Natural killer cell (primary cell): ENCODE measurements at regions of chr1 and their contacts with region 1.

Region 1: GRCh38 chr1:109483672-109484518 is at the start of gene ATXN7L2:
- DNase-seq: peak; percentile 88 to 97
- ATAC-seq: peak; percentile 83 to 93 (median 85)
- H3K4me3 ChIP-seq: peak within 1 kb of the TSS; percentile 52
- H3K4me3 Mint-ChIP-seq: peak within 1 kb of the TSS; percentile 93
- H3K27ac ChIP-seq: peak within 1 kb of the TSS; percentile 96
- H3K27ac Mint-ChIP-seq: peak within 1 kb of the TSS; percentile 83 to 87
- H3K4me1 ChIP-seq: peaks cover 17% of the 10 kb centered on the region
- H3K4me1 Mint-ChIP-seq: peaks cover 22 to 24% of the 10 kb centered on the region in 2 donors
- H3K27me3 ChIP-seq: no peaks in the 10 kb centered on the region
- H3K27me3 Mint-ChIP-seq: peaks cover 14 to 20% of the 10 kb centered on the region in 2 donors
- CTCF ChIP-seq: no peak
- total RNA-seq, gene ATXN7L2: 16.4 to 18.5 (median 18.3) TPM

Region 2: GRCh38 chr1:109248797-109249642 is 234.9 kb before region 1 on chr1 and contains the start of gene CELSR2:
- intact Hi-C with region 1: loop called (anchors 5 kb)
- DNase-seq: peak; percentile 58 to 82
- ATAC-seq: peak; percentile 87 to 96 (median 96)
- H3K4me3 ChIP-seq: peak within 1 kb of the TSS; percentile 26
- H3K4me3 Mint-ChIP-seq: peak within 1 kb of the TSS; percentile 78
- H3K27ac ChIP-seq: no peak within 1 kb of the TSS
- H3K27ac Mint-ChIP-seq: peak within 1 kb of the TSS in 1 of 2 donors; percentile 64
- H3K4me1 ChIP-seq: peaks cover 24% of the 10 kb centered on the region
- H3K4me1 Mint-ChIP-seq: peaks cover 0 to 28% of the 10 kb centered on the region in 2 donors
- H3K27me3 ChIP-seq: peaks cover 11% of the 10 kb centered on the region
- H3K27me3 Mint-ChIP-seq: peaks cover 9 to 14% of the 10 kb centered on the region in 2 donors
- CTCF ChIP-seq: no peak
- total RNA-seq, gene CELSR2: 7.1 to 9.7 (median 7.4) TPM

Region 3: DNA sequence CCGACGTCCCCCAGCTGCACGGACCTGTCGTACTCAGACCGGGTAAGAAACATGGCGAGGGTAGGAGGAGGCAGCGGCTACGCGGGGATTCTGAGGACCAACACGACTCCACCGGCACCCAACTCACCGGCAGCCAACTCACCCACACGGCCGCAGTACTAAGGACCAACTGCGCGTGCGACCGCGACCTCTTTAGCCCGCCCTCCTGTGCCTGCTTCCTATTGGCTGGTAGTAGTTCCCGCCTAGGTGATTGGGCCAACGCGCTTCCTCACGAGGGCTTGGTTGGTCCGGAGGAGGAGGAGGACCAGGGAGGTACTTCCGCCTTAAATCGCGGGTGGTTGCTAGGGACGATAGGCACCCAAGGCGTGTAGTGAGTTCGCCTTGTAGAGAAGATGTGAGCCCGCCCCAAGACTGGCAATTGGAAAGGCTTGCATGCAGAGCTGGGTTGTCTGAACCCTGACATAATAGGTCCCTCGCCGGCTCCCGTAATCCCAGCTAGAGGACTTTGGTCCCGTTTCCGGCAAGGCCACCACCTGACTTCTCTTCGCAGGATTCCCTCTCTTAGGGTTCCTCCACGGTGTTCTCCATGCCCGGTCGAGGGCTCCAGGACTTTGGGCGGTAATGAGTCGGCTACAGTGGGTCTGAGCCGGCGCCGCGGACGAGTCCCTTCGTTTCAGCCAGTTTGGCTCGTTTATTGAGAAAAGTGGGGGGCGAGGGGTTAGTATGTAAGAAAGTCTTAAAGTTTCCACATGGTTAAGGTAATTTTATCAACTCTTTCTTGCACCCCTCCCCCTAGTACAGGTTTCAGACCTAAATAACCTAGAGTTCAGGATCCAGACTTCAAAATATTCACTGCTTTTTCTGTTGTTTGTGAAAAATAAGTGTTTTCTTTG is 57.4 kb before region 1 on chr1 and contains the start of gene PSMA5:
- intact Hi-C with region 1: loop called (anchors 1 kb)
- DNase-seq: peak; percentile 92 to 98
- ATAC-seq: peak; percentile 87 to 98 (median 94)
- H3K4me3 ChIP-seq: peak within 1 kb of the TSS; percentile 94
- H3K4me3 Mint-ChIP-seq: peak within 1 kb of the TSS; percentile 96
- H3K27ac ChIP-seq: peak within 1 kb of the TSS; percentile 96
- H3K27ac Mint-ChIP-seq: peak within 1 kb of the TSS; percentile 98
- H3K4me1 ChIP-seq: peaks cover 17% of the 10 kb centered on the region
- H3K4me1 Mint-ChIP-seq: peaks cover 36 to 45% of the 10 kb centered on the region in 2 donors
- H3K27me3 ChIP-seq: no peaks in the 10 kb centered on the region
- H3K27me3 Mint-ChIP-seq: peaks cover 0 to 9% of the 10 kb centered on the region in 2 donors
- CTCF ChIP-seq: no peak
- total RNA-seq, gene PSMA5: 54.7 to 76.0 (median 59.6) TPM

Region 4: DNA sequence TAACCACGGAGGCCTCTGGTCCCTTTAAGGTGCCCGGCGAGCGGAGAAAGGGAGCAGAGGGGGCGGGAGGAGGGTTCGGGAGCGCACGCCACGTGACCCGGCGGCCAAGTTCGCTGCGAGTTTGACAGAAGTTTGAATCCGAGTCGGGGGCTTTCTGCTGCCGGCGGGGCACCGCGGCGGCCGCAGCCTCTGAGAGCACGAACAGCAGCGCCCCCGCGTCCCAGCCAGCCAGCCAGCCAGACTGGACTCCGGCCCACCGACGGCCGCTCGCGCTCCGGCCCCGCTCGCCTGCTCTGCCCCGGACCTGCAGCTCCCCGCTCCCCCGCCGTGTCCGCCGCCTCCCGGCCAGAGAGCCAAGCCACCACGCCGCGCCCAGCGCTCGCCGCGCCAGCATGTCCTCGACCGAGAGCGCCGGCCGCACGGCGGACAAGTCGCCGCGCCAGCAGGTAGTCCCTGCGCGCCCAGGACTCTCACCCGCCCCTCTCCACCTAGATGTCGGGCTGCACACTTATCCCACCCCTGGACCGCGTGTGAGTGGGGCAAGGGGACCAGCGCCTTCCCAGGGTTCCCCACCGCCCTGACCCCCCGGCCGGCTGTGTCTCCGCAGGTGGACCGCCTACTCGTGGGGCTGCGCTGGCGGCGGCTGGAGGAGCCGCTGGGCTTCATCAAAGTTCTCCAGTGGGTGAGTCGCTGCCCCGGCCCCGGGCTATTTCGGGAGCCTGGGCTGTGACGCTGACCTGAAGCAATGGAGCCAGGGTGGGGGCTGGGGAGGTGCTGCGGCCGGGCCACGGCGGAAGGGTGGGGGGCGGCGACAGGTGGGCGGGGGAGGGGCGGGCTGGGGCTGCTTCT is 17.2 kb before region 1 on chr1 and contains the start of gene SYPL2:
- intact Hi-C with region 1: loop called (anchors 1 kb)
- DNase-seq: peak in 1 of 2 donors; percentile 44
- ATAC-seq: peak; percentile 27 to 67 (median 55)
- H3K4me3 ChIP-seq: peak within 1 kb of the TSS; percentile 8
- H3K4me3 Mint-ChIP-seq: peak within 1 kb of the TSS; percentile 86
- H3K27ac ChIP-seq: no peak within 1 kb of the TSS
- H3K27ac Mint-ChIP-seq: no peak within 1 kb of the TSS
- H3K4me1 ChIP-seq: peaks cover 13% of the 10 kb centered on the region
- H3K4me1 Mint-ChIP-seq: peaks cover 0 to 8% of the 10 kb centered on the region in 2 donors
- H3K27me3 ChIP-seq: peaks cover 41% of the 10 kb centered on the region
- H3K27me3 Mint-ChIP-seq: peaks cover 62 to 79% of the 10 kb centered on the region in 2 donors
- CTCF ChIP-seq: no peak
- total RNA-seq, gene SYPL2: not detected

Region 5: GRCh38 chr1:109493805-109494539 is 10.1 kb after region 1 on chr1 and contains the start of gene CYB561D1:
- intact Hi-C with region 1: loop called (anchors 1 kb)
- DNase-seq: peak; percentile 87 to 94
- ATAC-seq: peak; percentile 92 to 98 (median 93)
- H3K4me3 ChIP-seq: peak within 1 kb of the TSS; percentile 99
- H3K4me3 Mint-ChIP-seq: peak within 1 kb of the TSS; percentile 93
- H3K27ac ChIP-seq: peak within 1 kb of the TSS; percentile 65
- H3K27ac Mint-ChIP-seq: peak within 1 kb of the TSS; percentile 76 to 93
- H3K4me1 ChIP-seq: peaks cover 54% of the 10 kb centered on the region
- H3K4me1 Mint-ChIP-seq: peaks cover 13 to 35% of the 10 kb centered on the region in 2 donors
- H3K27me3 ChIP-seq: no peaks in the 10 kb centered on the region
- H3K27me3 Mint-ChIP-seq: no peaks in the 10 kb centered on the region
- CTCF ChIP-seq: peak; percentile 91
- total RNA-seq, gene CYB561D1: 21.1 to 36.0 (median 34.7) TPM

Region 6: GRCh38 chr1:109910123-109910962 is 426.4 kb after region 1 on chr1 and contains the start of gene CSF1:
- intact Hi-C with region 1: no loop called
- DNase-seq: peak; percentile 52 to 81
- ATAC-seq: peak; percentile 61 to 77 (median 75)
- H3K4me3 ChIP-seq: peak within 1 kb of the TSS; percentile 46
- H3K4me3 Mint-ChIP-seq: peak within 1 kb of the TSS; percentile 89
- H3K27ac ChIP-seq: no peak within 1 kb of the TSS
- H3K27ac Mint-ChIP-seq: peak within 1 kb of the TSS; percentile 18 to 81
- H3K4me1 ChIP-seq: peaks cover 33% of the 10 kb centered on the region
- H3K4me1 Mint-ChIP-seq: peaks cover 25 to 30% of the 10 kb centered on the region in 2 donors
- H3K27me3 ChIP-seq: peaks cover 14% of the 10 kb centered on the region
- H3K27me3 Mint-ChIP-seq: peaks cover 34 to 51% of the 10 kb centered on the region in 2 donors
- CTCF ChIP-seq: no peak
- total RNA-seq, gene CSF1: 2.1 to 57.9 (median 3.7) TPM